Ovary (tissue), 10 donors: ENCODE measurements at regions of chr5 and their contacts with region 1.

Region 1: DNA sequence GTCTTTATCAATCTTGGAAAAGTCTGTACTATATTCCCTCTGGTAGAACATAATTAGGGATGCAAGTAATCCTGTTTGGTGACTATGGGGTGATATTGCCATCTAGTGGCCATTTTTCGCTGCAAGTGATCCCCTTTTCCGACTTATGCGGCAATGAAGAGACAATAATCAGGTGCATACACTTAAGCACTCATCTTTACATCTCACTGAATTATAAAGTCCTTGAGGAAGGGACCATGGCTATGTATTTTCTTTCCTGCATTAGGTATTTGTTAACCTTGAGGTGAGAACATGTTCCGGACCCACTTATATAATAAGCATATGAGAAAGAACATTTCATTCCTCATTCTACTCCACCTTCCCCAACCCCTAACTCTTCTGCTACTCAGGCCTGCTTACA is 19.6 kb upstream of the LIX1 start:
- DNase-seq: peak in 4 of 5 donors; percentile 31 to 73 (median 44)
- H3K4me3 ChIP-seq: no peak overlapping the region
- H3K27ac ChIP-seq: no peak overlapping the region
- H3K4me1 ChIP-seq: no peaks in the 10 kb centered on the region
- H3K27me3 ChIP-seq: no peaks in the 10 kb centered on the region
- CTCF ChIP-seq: peak; percentile 68 to 78 (median 71)
- EP300 ChIP-seq: no peak
- POLR2A ChIP-seq: no peak

Region 2: DNA sequence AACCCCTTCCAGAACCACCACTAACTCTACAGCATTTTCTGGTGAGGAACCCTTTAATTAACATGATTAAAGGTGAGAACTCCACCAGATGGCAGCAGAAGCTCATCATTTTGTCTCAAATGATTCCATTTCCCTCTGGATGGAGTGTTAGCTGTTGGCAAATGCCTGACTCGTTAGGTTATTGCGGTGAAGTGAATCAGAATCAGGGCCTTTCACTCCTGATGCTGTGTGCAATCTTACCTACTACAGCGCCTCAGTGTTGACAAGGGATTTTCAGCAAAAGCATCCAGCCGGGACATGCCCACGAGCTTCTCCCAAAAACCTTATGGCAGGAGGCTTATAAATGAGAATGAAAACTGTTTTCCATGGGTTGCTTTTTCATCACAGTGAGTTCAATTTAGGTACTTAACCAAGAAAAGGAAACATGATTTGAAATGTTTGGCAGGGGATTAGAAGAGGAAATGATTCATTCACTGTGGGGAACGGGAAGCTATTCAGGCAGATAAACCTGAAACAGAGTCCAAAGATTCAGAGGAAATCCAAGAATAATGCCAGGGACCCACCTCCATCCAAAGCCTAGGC is 547.8 kb before region 1 on chr5:
- intact Hi-C with region 1: loop called in 2 of 4 experiments (anchors 5 to 10 kb)
- DNase-seq: peak in 4 of 5 donors; percentile 31 to 75 (median 52)
- H3K4me3 ChIP-seq: no peak overlapping the region
- H3K27ac ChIP-seq: no peak overlapping the region
- H3K4me1 ChIP-seq: no peaks in the 10 kb centered on the region
- H3K27me3 ChIP-seq: no peaks in the 10 kb centered on the region
- CTCF ChIP-seq: peak; percentile 36 to 70 (median 70)
- EP300 ChIP-seq: no peak
- POLR2A ChIP-seq: no peak

Region 3: DNA sequence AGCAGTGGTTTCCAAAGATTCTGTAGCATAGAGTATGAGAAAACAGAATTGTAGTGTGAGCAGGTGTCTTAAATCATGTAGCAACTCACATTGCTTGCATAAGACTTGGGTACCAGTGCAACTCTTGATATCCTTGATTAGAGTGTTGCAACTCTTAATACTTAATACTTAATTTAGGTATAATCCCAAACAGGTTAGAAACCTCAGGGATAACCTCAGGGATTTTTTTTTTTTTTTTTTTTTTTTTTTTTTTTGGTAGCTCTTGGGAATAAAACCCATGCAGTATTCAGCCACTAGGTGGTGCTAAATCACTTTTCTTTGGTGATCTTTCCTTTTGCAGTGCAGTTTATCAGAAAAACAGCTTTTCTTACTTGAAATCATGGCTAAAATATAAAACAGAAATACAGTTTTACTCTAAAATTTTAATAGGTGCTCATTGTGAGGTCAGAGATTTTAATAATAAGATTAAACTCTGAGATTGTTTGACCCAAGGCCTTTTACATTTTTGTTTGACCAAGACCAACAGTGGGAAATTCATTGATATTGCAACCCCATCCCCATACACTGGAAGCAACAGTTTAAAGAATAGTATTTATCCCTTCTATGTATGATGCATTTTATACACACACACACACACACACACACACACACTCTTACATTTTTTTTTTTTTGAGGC is 409.6 kb before region 1 on chr5:
- intact Hi-C with region 1: loop called in 2 of 4 experiments (anchors 2 to 10 kb)
- DNase-seq: peak in 1 of 5 donors; percentile 30
- H3K4me3 ChIP-seq: no peak overlapping the region
- H3K27ac ChIP-seq: no peak overlapping the region
- H3K4me1 ChIP-seq: no peaks in the 10 kb centered on the region
- H3K27me3 ChIP-seq: no peaks in the 10 kb centered on the region
- CTCF ChIP-seq: peak in 2 of 3 donors; percentile 27 to 29
- EP300 ChIP-seq: no peak
- POLR2A ChIP-seq: no peak

Region 4: DNA sequence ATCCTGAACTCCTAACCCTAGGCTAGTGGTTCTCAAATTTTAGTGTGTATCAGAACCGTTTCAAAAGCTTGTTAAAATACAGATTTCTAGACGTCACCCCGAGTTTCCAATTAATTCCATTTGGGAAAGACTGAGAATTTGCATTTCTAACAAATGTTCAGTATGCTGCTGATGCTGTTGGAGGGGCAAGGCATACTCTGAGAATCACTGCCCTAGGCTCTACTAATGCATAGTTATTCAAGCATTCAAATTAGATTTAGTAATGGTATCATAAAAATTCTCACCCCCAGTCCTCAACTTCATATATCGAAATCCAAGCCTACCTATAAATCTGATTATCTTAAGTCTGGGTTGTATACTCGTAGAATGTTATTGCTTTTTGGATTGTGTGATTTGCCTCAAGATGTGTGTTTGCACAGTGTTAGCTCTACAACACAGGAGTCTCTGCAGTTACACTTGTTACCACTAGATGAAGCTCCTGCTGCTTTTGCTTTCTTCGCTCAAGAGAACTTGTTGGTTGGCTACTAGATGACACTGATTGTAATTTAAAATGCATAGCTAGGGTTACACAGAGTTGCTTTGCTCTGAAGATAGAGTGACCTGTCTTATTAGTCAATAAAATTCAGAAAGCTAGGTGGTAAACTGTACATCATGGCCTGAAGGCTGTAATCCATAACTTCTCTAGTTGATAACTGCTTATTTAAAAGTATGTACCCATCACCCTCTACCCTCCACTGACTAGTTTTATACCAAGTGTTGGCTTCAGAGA is 293.3 kb before region 1 on chr5:
- intact Hi-C with region 1: loop called in 2 of 4 experiments (anchors 5 kb)
- DNase-seq: no peak
- H3K4me3 ChIP-seq: no peak overlapping the region
- H3K27ac ChIP-seq: no peak overlapping the region
- H3K4me1 ChIP-seq: no peaks in the 10 kb centered on the region
- H3K27me3 ChIP-seq: no peaks in the 10 kb centered on the region
- CTCF ChIP-seq: peak; percentile 36 to 73 (median 66)
- EP300 ChIP-seq: no peak
- POLR2A ChIP-seq: no peak